HEK293 (cell line): ENCODE measurements at regions of chr11 and their contacts with region 1.

Region 1: DNA sequence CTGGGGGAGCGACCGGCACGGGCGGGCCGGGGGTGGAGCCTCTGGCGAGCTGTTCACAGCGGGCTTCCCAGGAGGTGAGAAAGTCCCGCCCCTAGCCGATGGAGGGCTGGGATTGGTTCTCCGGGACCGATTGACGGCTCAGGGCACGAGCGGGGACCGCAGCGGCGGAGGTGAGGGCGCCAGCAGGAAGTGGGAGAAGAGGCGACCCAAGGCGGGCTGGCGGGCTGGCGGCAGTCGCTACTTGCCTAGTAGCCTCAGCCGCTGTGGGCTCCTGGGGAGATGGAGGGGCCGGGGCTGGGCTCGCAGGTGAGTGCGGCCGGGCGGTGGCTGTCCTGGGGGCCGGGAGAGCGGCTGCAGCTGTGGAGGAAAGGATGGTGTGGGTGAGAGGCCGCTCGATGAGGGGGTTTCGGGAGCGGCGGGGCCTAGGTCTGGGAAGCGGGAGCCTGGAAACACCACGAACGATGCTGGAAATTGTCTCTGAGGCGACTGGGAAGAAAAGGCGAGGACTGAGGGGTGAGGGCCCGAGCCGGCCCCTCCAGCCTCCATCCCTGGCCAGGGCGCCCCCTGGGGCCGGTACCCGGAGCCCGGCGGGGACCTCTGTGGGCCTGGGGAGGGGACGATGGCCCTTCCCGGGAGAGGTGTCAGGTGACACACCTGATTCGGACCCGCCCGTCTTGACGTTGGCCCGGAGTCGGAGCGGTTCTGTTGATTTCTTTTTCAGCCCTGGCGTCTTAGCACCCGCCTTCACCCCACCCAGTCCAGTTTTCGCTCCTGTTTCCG is at the start of gene ZDHHC13:
- H3K4me3 ChIP-seq: peak within 1 kb of the TSS; percentile 97
- H3K27ac ChIP-seq: peak within 1 kb of the TSS; percentile 58; the same call in 1 of the 2 replicates
- H3K4me1 ChIP-seq: no peaks in the 10 kb centered on the region
- CTCF ChIP-seq: peak; percentile 70

Region 2: DNA sequence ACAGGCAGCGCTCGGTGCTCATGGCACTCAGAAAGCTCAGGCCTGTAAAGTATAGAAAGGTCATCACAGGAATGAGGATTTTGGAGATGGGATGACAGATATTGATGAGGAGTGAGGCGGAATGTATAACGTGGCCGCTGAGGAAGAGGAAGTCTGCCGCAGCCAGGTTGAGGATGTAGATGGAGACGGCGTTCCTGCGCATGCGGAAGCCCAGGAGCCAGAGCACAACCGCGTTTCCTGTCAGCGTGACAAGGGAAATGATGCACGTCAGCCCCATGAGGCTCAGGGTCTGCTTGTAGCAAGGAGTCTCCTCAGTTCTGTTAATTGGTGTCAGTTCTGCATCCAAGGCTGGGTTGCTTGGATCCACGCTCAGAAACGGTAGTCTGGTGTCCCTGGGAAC is 144.8 kb before region 1 on chr11:
- CTCF ChIA-PET with region 1: no interaction called
- POLR2A ChIA-PET with region 1: no interaction called
- H3K4me3 ChIP-seq: no peak overlapping the region
- H3K27ac ChIP-seq: no peak overlapping the region
- H3K4me1 ChIP-seq: no peaks in the 10 kb centered on the region
- CTCF ChIP-seq: no peak

Region 3: GRCh38 chr11:19099093-19099492 is 18.1 kb before region 1 on chr11:
- CTCF ChIA-PET with region 1: no interaction called
- POLR2A ChIA-PET with region 1: interaction called, 10 read pairs
- H3K4me3 ChIP-seq: no peak overlapping the region
- H3K27ac ChIP-seq: no peak overlapping the region
- H3K4me1 ChIP-seq: peaks cover 5% of the 10 kb centered on the region; the same call in 1 of the 2 replicates
- CTCF ChIP-seq: no peak

Region 4: GRCh38 chr11:19232910-19233503 is 115.8 kb after region 1 on chr11:
- CTCF ChIA-PET with region 1: no interaction called
- POLR2A ChIA-PET with region 1: no interaction called
- H3K4me3 ChIP-seq: no peak overlapping the region
- H3K27ac ChIP-seq: no peak overlapping the region
- H3K4me1 ChIP-seq: no peaks in the 10 kb centered on the region
- CTCF ChIP-seq: no peak